Activated B cell treated with CpG ODN at 0.5 μM for 24 hours (primary cell): ENCODE measurements at regions of chr3 and their contacts with region 1.

Region 1: DNA sequence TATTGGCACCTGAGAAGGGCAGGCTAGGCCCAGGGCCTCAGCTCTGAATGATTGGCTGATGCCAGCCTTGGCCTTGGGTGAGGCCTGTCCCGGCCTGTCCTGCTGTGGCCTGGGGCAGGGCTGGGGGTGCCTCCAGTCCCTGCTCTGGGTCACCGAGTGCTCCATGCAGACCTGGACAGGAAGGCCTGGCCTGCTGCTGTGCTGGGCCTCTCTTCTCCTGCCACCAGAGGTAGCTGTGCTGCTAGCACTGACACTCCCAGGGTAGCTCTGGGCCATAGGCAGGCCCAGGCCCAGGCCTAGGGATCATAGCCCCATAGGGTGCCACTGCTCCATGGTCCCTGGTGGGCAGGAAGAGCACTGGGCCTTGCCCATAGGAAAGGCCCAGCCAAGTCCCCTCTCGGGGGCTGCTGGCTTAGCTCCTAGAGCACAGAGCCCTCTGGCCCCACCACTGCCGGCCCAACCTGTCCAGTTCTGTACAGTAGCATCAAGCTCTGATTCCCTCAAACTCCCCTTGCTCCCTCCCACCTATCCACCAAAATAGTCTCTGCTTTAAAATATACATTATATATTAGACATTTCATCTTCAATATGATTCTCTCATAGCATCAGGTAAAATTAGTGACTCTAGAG is 18.2 kb downstream of the ABTB1 start:
- DNase-seq: no peak
- ATAC-seq: peak; percentile 69
- H3K4me3 Mint-ChIP-seq: no peak overlapping the region
- H3K27ac Mint-ChIP-seq: no peak overlapping the region
- H3K4me1 Mint-ChIP-seq: peaks cover 23% of the 10 kb centered on the region
- H3K27me3 Mint-ChIP-seq: peaks cover 2% of the 10 kb centered on the region
- CTCF ChIP-seq: no peak

Region 2: DNA sequence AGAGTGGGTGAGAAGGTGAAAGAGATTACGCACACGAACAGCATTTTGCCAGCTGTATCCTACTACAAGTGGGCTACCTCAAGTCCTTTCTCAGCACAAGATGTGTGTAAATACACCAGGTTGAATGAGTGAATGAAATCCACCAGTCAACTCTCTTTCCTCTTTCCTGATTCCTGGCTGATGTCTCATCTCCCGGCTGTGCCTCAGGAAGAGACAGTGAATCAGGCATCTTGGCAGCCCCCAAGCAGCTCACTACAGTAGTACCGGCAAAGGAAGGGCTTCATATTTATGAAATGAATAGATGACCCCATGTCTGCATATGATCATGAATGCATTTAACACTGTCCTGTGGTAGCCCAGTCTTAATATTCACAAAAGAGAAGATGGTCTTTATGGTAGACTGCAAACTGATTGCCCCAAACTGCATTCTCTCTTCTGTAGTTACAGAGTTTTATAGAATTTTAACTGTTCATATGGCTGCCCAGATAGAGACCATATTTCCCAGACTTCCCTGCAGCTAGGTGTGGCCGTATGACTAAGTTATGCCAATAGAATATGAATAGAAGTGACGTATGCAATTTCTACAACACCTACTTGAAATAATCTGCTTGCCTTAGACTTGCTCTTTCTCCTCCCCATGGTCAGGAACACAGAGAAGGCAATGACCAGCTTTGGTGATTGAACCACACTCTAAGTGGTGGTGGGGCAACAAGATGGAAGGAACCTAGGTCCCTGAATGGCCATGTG is 108.7 kb after region 1 on chr3:
- CTCF ChIA-PET with region 1: no interaction called
- POLR2A ChIA-PET with region 1: no interaction called
- intact Hi-C with region 1: no loop called
- DNase-seq: no peak
- ATAC-seq: no peak
- H3K4me3 Mint-ChIP-seq: no peak overlapping the region
- H3K27ac Mint-ChIP-seq: no peak overlapping the region
- H3K4me1 Mint-ChIP-seq: peaks cover 9% of the 10 kb centered on the region
- H3K27me3 Mint-ChIP-seq: no peaks in the 10 kb centered on the region
- CTCF ChIP-seq: no peak

Region 3: DNA sequence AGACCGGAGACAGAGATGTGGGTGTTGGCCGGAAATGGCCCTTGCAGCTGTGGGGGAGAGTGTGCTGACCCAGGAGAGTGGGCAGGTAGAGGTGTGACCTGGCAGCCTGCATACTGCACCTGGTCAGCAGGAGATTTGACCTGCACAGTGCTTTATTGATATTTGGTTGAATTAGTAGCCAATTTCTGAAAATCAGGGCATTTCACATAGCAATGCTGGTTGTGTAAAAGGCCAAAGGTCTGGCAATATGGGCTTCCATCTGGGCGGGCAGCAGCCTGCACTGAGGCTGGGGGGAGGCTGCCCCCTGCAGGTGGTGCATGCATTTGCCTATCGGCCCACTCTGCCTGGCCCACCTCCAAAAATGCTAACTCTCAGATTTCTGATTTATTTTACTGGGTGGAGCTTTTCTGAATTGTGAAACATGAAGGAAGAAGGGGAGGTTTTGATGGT is 140.8 kb after region 1 on chr3:
- CTCF ChIA-PET with region 1: interaction called, 5 read pairs
- POLR2A ChIA-PET with region 1: no interaction called
- intact Hi-C with region 1: loop called (anchors 1 kb)
- DNase-seq: peak; percentile 32
- ATAC-seq: no peak
- H3K4me3 Mint-ChIP-seq: no peak overlapping the region
- H3K27ac Mint-ChIP-seq: no peak overlapping the region
- H3K4me1 Mint-ChIP-seq: peaks cover 40% of the 10 kb centered on the region
- H3K27me3 Mint-ChIP-seq: no peaks in the 10 kb centered on the region
- CTCF ChIP-seq: no peak

Region 4: DNA sequence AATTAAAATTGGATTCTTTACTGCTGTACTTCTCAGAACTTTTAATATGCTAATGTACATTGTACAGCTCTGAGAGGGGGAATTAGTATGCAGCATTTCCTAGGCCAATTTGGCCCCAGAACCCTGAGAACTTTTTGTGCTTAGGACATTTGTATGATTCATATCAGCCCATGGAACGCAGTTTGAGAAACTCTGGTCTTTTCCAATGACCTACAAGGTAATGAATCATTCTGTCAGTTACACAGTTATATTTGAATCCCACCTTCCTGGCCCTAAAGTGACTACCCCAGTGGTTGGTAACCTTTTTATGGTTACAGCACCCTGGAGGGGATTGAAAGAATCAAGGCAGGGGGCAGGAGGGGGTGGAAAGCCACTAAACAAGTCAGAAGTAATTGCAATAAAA is 198.5 kb after region 1 on chr3:
- CTCF ChIA-PET with region 1: no interaction called
- POLR2A ChIA-PET with region 1: no interaction called
- intact Hi-C with region 1: no loop called
- DNase-seq: no peak
- ATAC-seq: no peak
- H3K4me3 Mint-ChIP-seq: no peak overlapping the region
- H3K27ac Mint-ChIP-seq: no peak overlapping the region
- H3K4me1 Mint-ChIP-seq: peaks cover 8% of the 10 kb centered on the region
- H3K27me3 Mint-ChIP-seq: no peaks in the 10 kb centered on the region
- CTCF ChIP-seq: no peak

Region 5: GRCh38 chr3:127959846-127960245 is 268.9 kb after region 1 on chr3:
- CTCF ChIA-PET with region 1: interaction called, 11 read pairs
- POLR2A ChIA-PET with region 1: no interaction called
- intact Hi-C with region 1: loop called (anchors 1 kb)
- DNase-seq: no peak
- ATAC-seq: no peak
- H3K4me3 Mint-ChIP-seq: no peak overlapping the region
- H3K27ac Mint-ChIP-seq: no peak overlapping the region
- H3K4me1 Mint-ChIP-seq: no peaks in the 10 kb centered on the region
- H3K27me3 Mint-ChIP-seq: no peaks in the 10 kb centered on the region
- CTCF ChIP-seq: no peak

Region 6: DNA sequence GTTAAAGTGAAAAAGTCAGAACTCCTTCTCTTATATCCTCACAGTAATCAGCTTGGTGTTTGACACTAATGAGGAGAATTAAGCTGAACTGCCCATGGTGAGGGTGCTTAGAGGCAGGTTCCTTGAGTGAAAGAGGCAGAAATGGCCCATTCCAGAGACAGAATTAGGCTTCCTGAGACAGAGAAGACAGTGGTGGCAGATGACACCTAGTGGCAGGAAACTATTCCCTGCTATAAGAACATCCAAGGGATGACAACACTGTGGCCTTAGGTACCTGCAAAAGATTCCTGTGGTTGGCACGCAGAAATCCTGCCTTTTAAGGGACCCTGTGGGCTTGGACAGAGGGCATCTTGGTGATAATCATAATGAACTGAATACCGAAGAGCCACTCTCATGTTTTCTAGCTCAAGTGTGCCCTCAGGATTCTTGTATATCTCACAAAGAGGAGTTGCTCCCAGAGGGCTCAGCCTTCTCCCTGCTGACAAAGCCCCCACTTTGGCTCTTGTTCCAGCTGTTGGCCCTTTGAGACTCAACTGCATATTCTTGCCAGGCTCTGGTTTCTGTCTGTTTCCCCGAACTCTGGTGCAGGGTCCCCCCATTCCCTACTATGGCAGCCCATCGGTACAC is 280.1 kb after region 1 on chr3:
- CTCF ChIA-PET with region 1: interaction called, 3 read pairs
- POLR2A ChIA-PET with region 1: no interaction called
- intact Hi-C with region 1: loop called (anchors 1 kb)
- DNase-seq: no peak
- ATAC-seq: peak; percentile 67
- H3K4me3 Mint-ChIP-seq: no peak overlapping the region
- H3K27ac Mint-ChIP-seq: no peak overlapping the region
- H3K4me1 Mint-ChIP-seq: no peaks in the 10 kb centered on the region
- H3K27me3 Mint-ChIP-seq: peaks cover 5% of the 10 kb centered on the region
- CTCF ChIP-seq: peak; percentile 30